Activated CD4-positive, alpha-beta memory T cell treated with anti-CD3 and anti-CD28 coated beads, Interleukin-2, amount 10 ng/mL, durations not matched to agents 7 days and 5 days (primary cell): ENCODE measurements at regions of chr1 and their contacts with region 1.

Region 1: GRCh38 chr1:165924117-165924516 is 96.7 kb downstream of the UCK2 start:
- DNase-seq: no peak
- H3K4me3 Mint-ChIP-seq: no peak overlapping the region
- H3K27ac Mint-ChIP-seq: no peak overlapping the region
- H3K4me1 Mint-ChIP-seq: peaks cover 11% of the 10 kb centered on the region
- H3K27me3 Mint-ChIP-seq: peaks cover 11% of the 10 kb centered on the region

Region 2: DNA sequence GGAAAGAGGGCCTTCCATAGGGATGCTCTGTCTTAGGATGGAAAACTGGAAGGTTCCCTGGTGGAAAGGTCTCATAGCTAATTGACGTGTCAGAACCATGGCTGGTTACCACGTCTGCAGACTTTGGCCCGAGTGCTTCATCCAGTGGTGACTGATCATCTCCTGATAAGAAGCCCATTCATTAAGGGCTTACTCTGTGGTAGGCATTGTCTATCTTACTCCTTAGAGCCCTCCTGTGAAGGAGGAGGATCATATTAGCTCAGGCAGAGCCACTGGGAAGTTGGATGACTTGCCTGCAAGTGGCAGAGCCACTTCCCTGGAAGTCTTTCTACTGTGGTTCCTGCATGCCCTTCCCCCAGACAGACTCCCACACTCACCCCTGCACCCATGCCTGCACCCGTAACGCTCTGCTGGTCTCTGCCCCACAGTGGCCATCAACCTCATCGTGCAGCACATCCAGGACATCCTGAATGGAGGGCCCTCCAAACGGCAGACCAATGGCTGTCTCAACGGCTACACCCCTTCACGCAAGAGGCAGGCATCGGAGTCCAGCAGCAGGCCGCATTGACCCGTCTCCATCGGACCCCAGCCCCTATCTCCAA is 16.8 kb before region 1 on chr1:
- CTCF ChIA-PET with region 1: interaction called, 13 read pairs
- POLR2A ChIA-PET with region 1: no interaction called
- DNase-seq: no peak
- H3K4me3 Mint-ChIP-seq: no peak overlapping the region
- H3K27ac Mint-ChIP-seq: no peak overlapping the region
- H3K4me1 Mint-ChIP-seq: peaks cover 6% of the 10 kb centered on the region
- H3K27me3 Mint-ChIP-seq: no peaks in the 10 kb centered on the region